Activated CD4-positive, alpha-beta memory T cell treated with anti-CD3 and anti-CD28 coated beads for 36 hours (primary cell): ENCODE measurements at regions of chr4 and their contacts with region 1.

Region 1: GRCh38 chr4:118850488-118851173 is 14.7 kb upstream of the SEC24D start:
- DNase-seq: peak; percentile 35
- H3K4me3 Mint-ChIP-seq: peak overlapping the region; percentile 90
- H3K27ac Mint-ChIP-seq: peak overlapping the region; percentile 84
- H3K4me1 Mint-ChIP-seq: peaks cover 18% of the 10 kb centered on the region
- H3K27me3 Mint-ChIP-seq: peaks cover 2% of the 10 kb centered on the region

Region 2: GRCh38 chr4:118296729-118297128 is 553.9 kb before region 1 on chr4:
- CTCF ChIA-PET with region 1: no interaction called
- POLR2A ChIA-PET with region 1: no interaction called
- intact Hi-C with region 1: no loop called
- DNase-seq: no peak
- H3K4me3 Mint-ChIP-seq: no peak overlapping the region
- H3K27ac Mint-ChIP-seq: no peak overlapping the region
- H3K4me1 Mint-ChIP-seq: no peaks in the 10 kb centered on the region
- H3K27me3 Mint-ChIP-seq: peaks cover 4% of the 10 kb centered on the region

Region 3: GRCh38 chr4:118865091-118865708 is 14.6 kb after region 1 on chr4:
- CTCF ChIA-PET with region 1: interaction called, 14 read pairs
- POLR2A ChIA-PET with region 1: interaction called, 3 read pairs
- intact Hi-C with region 1: no loop called
- DNase-seq: peak; percentile 12
- H3K4me3 Mint-ChIP-seq: no peak overlapping the region
- H3K27ac Mint-ChIP-seq: no peak overlapping the region
- H3K4me1 Mint-ChIP-seq: no peaks in the 10 kb centered on the region
- H3K27me3 Mint-ChIP-seq: no peaks in the 10 kb centered on the region